Activated CD4-positive, alpha-beta T cell treated with anti-CD3 and anti-CD28 coated beads, Interleukin-2, amount 10 ng/mL, durations not matched to agents 24 days and 14 days (primary cell): ENCODE measurements at regions of chr17 and their contacts with region 1.

Region 1: GRCh38 chr17:43576563-43577229 is 30.6 kb upstream of the ETV4 start:
- DNase-seq: peak; percentile 90
- H3K4me3 Mint-ChIP-seq: no peak overlapping the region
- H3K27ac Mint-ChIP-seq: no peak overlapping the region
- H3K4me1 Mint-ChIP-seq: peaks cover 23% of the 10 kb centered on the region
- H3K27me3 Mint-ChIP-seq: peaks cover 2% of the 10 kb centered on the region

Region 2: DNA sequence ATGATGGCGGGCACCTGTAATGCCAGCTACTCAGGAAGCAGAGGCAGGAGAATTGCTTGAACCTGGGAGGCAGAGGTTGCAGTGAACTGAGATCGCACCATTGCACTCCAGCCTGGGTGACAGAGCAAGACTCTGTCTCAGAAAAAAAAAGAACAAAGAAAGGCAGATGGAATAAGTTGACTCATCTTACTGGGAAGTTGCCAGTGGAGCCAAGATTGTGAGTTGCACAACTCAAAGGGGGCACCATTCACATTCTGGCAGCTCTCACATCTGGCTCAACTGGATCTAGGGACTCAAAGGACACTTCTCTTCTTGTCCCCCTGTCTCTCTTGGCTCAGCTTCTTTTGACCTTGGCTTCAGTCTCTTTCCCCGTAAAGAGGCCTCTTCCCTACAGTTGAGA is 23.1 kb after region 1 on chr17:
- intact Hi-C with region 1: no loop called
- DNase-seq: no peak
- H3K4me3 Mint-ChIP-seq: no peak overlapping the region
- H3K27ac Mint-ChIP-seq: no peak overlapping the region
- H3K4me1 Mint-ChIP-seq: peaks cover 2% of the 10 kb centered on the region
- H3K27me3 Mint-ChIP-seq: peaks cover 10% of the 10 kb centered on the region

Region 3: GRCh38 chr17:43673516-43674323 is 97.0 kb after region 1 on chr17:
- intact Hi-C with region 1: loop called (anchors 1 kb)
- DNase-seq: peak; percentile 92
- H3K4me3 Mint-ChIP-seq: no peak overlapping the region
- H3K27ac Mint-ChIP-seq: no peak overlapping the region
- H3K4me1 Mint-ChIP-seq: peaks cover 22% of the 10 kb centered on the region
- H3K27me3 Mint-ChIP-seq: peaks cover 10% of the 10 kb centered on the region

Region 4: GRCh38 chr17:43760254-43760852 is 183.7 kb after region 1 on chr17:
- intact Hi-C with region 1: loop called (anchors 1 kb)
- DNase-seq: peak; percentile 97
- H3K4me3 Mint-ChIP-seq: no peak overlapping the region
- H3K27ac Mint-ChIP-seq: no peak overlapping the region
- H3K4me1 Mint-ChIP-seq: no peaks in the 10 kb centered on the region
- H3K27me3 Mint-ChIP-seq: peaks cover 18% of the 10 kb centered on the region